ENCODE measurements at regions of chr18 and their contacts with region 1.

Region 1: DNA sequence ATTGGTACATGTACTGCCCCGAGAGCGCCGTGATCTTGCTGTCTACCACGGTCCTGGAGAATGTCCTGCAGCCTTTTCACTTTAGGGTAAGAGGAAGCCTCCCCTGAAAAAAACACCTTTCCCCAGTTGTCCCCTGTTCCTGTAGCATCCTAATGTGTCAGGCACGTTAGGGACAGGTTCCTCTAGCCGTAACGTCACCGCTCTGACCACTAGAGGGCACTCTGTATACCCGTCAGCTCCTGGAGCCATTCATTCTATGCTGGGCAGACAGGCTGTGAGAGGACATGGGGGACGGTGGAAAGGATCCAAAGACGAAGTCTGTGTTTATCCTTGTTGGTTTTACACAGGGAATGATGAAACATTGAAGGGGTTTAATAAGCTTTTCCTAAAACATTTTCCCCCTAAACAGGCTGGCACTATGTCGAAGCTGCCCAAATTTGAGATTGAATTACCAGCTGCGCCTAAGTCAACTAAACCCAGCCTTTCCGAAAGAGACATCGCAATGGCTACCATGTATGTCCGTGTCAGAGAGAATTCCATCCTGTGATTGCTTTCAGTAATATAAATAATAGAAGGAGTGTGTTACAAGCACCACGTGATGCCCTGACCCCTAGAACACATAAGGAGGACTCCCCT is 12.7 kb downstream of the RMC1 start:
- H3K4me3 ChIP-seq: no peak overlapping the region
- H3K27ac ChIP-seq: no peak overlapping the region
- H3K4me1 ChIP-seq: no peaks in the 10 kb centered on the region
- CTCF ChIP-seq: peak; percentile 62

Region 2: DNA sequence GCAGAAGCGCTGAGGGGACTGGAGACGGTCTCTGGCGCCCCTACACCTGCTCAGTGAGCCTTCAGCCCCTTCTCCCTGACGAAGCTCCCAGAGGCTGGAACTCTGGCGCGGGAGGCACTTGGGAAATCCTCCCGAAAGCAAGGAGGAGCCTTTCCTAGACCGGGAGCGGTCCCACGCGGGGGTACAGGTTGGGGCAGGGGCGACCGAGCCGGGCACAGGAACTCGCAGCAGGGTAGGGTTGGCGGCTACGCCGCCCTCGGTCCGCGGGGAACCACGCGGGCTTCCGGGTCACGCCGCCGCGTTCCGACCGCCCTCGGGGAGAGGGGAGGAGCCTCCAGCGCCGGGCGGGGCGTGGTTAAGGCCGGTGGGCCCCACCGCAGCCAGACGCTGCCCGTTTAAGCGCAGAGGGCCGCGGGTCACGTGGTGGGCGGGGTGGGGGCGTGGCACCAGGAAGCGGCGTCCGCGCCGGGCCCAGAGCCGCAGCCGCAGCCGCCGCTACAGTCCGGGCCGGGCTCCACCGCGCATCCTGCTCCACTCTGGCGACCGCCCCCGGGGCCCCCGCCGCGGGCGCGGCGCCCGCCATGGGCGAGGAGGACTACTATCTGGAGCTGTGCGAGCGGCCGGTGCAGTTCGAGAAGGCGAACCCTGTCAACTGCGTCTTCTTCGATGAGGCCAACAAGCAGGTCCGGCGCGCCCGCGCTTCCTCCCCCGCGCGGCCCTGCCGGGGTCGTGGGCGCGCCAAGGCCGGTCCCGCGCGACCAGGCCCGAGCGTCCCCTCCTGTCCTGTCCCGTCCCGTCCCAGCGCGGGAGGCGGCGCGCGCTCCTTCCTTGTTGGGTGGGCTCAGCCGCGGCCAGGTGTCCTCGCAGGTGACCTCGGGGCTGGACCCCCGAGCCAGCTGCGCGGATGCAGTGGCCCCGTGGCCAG is 12.7 kb before region 1 on chr18 and contains the start of gene RMC1:
- CTCF ChIA-PET with region 1: interaction called, 24 read pairs
- POLR2A ChIA-PET with region 1: interaction called, 3 read pairs
- H3K4me3 ChIP-seq: peak within 1 kb of the TSS; percentile 86
- H3K27ac ChIP-seq: peak within 1 kb of the TSS; percentile 48; the same call in 1 of the 2 replicates
- H3K4me1 ChIP-seq: no peaks in the 10 kb centered on the region
- CTCF ChIP-seq: peak; percentile 82

Region 3: DNA sequence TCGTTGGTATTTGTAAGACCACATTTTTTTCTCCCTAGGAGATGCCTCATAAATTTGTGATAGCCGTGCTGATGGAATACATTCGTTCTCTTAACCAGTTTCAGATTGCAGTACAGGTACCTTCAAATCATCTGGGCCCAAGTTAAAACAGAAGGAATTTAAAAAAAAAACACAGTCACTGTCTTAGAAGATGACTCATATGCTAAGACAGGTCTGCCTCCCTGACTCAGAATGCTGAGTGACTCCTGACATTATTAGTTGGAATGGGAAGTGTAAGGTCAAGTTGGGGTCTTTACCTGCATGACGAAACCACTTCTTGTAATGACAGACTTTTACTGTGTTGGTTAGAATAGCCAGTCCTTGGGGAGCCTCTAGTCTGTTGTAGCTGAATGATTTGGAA is 13.6 kb after region 1 on chr18:
- CTCF ChIA-PET with region 1: interaction called, 20 read pairs
- POLR2A ChIA-PET with region 1: interaction called, 4 read pairs
- H3K4me3 ChIP-seq: no peak overlapping the region
- H3K27ac ChIP-seq: no peak overlapping the region
- H3K4me1 ChIP-seq: no peaks in the 10 kb centered on the region
- CTCF ChIP-seq: no peak

Region 4: GRCh38 chr18:23578891-23579653 is 63.0 kb after region 1 on chr18:
- CTCF ChIA-PET with region 1: interaction called, 23 read pairs
- POLR2A ChIA-PET with region 1: no interaction called
- H3K4me3 ChIP-seq: no peak overlapping the region
- H3K27ac ChIP-seq: no peak overlapping the region
- H3K4me1 ChIP-seq: peaks cover 22% of the 10 kb centered on the region
- CTCF ChIP-seq: no peak

Region 5: DNA sequence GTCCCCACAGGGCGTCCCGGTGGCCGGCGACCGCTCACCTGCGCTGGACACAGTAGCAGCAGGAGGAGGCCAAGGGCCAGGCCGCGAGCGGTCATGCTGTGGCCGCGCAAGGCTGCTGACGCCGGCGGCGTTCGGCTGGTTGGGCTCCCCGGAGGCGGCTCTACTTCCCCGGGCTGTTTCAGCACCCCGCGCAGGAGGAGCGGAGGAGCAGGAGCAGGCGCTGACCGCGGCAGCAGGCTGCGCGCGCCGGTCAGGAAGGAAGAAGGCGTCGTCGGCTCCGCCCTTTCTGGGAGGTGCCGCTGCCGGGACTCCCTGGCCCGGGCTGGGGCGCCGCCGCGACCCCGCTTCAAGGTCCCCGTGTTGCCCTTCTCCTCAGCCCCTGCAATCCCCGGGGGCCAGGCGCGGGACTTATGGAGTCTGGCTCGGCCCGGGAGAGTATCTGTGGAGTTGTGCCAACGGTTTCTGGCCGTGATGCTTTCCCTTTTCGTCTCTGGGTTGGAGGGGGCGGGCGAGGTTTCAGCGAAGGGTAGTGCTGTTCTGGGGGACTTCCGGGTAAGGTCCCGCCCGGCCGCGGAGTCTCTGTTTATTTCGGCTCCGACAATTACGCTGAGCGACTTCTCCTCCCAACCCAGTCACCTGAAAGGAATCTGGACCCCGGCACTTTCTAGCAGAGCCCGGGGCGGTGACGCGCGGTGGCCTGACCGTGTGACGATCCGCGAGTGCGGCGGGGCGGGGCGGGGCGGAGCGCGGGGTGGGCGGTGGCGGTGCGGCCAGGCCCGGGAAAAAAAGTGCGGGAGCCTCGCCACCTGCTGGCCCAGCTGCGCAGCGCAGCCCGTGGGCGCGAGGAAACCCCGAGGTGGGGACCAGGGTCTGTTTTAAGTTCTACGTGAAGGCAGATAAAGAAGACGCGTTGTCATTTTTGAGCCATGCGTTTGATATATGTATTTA is 70.5 kb after region 1 on chr18 and contains the start of gene NPC1:
- CTCF ChIA-PET with region 1: interaction called, 23 read pairs
- POLR2A ChIA-PET with region 1: no interaction called
- H3K4me3 ChIP-seq: peak within 1 kb of the TSS; percentile 75
- H3K27ac ChIP-seq: peak within 1 kb of the TSS; percentile 97
- H3K4me1 ChIP-seq: peaks cover 2% of the 10 kb centered on the region; the same call in 1 of the 2 replicates
- CTCF ChIP-seq: no peak

Region 6: GRCh38 chr18:25453556-25454269 is 1937.7 kb after region 1 on chr18:
- CTCF ChIA-PET with region 1: no interaction called
- POLR2A ChIA-PET with region 1: no interaction called
- H3K4me3 ChIP-seq: no peak overlapping the region
- H3K27ac ChIP-seq: no peak overlapping the region
- H3K4me1 ChIP-seq: no peaks in the 10 kb centered on the region
- CTCF ChIP-seq: no peak